Transverse colon (tissue), 4 donors: ENCODE measurements at regions of chrX and their contacts with region 1.

Region 1: DNA sequence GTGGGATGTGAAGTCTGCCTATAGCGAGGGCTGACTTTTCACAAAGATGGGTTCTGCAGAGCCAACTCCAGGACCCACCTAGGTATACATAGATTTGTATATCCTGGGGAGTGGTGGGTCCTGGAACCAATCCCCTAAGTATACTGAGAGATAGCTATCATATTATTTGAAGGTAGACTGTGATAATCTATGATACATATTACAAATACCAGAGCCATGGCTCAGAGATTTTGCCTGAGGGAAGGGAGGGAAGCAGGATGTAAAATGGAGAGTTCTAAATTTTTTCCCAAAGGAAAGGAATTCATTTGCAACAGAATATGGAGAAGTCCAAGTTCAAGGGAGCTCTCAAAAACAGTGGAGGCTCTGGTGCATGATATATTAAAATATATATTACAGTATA is 7.2 kb downstream of the TCEAL3 start:
- DNase-seq: no peak
- H3K4me3 ChIP-seq: no peak overlapping the region
- H3K27ac ChIP-seq: no peak overlapping the region
- H3K4me1 ChIP-seq: no peaks in the 10 kb centered on the region
- H3K27me3 ChIP-seq: no peaks in the 10 kb centered on the region
- CTCF ChIP-seq: no peak
- EP300 ChIP-seq: no peak
- POLR2A ChIP-seq: no peak

Region 2: DNA sequence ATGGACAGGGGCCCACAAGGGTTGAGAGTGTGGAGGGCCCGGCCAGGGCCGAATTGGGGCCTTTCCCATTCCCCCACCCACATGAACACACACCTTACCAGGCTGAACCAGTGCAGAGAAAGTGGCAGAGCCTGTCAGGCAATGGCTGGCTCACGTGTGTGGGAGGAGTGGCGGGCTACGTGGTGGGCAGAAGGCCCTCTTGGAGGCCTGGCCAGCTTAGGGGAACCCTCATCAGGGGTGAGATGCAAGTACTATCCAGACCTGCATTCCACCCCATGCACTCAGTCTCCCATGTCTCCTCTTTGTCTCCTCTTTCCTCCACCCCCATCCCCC is 28.7 kb before region 1 on chrX:
- in situ Hi-C with region 1: no loop called
- intact Hi-C with region 1: loop called (anchors 1 kb)
- DNase-seq: no peak
- H3K4me3 ChIP-seq: peak overlapping the region; percentile 48 to 64 (median 56)
- H3K27ac ChIP-seq: peak overlapping the region; percentile 78 to 87 (median 84)
- H3K4me1 ChIP-seq: peaks cover 0 to 6% (median 0%) of the 10 kb centered on the region in 4 donors
- H3K27me3 ChIP-seq: no peaks in the 10 kb centered on the region
- CTCF ChIP-seq: no peak
- EP300 ChIP-seq: no peak
- POLR2A ChIP-seq: no peak

Region 3: DNA sequence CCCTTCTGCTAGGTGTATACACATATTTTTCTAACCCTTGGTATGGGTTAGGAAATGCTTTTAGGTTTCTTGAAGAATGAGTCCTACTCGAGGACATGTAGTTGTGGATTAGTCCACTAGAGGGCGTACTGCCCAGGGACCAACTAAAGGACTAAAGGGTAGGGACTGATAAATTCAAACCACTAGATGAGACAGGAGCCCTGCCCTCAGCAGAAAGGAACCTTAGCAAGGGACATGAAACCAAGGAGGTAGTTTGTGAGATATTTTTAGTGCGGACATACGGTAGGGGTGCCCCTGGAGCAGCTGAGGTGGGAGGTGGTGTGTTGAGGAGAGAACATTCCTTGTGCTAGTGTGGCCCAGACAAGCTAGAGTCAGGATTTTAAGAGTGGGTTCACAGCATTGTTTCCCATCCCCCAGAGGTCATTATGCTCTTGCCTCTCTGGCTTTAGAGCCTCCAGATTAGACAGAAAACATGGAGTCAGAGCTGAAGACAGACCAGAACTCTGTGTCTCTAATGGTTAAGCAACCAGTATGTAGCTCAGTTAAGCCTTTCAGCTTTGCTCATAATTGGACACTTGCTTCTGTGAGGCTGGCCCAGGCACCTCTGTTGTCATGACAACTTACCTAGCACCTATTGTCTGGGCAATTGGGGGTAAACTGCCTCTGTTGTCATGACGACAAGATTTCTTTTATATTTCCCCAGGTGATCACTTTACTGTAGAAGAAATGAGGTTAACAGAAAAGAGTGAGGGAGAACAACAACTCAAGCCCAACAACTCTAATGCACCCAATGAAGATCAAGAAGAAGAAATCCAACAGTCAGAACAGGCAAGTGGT is 96.8 kb after region 1 on chrX:
- in situ Hi-C with region 1: no loop called
- intact Hi-C with region 1: no loop called
- DNase-seq: peak; percentile 66
- H3K4me3 ChIP-seq: no peak overlapping the region
- H3K27ac ChIP-seq: no peak overlapping the region
- H3K4me1 ChIP-seq: peaks cover 3 to 5% (median 3%) of the 10 kb centered on the region in 4 donors
- H3K27me3 ChIP-seq: no peaks in the 10 kb centered on the region
- CTCF ChIP-seq: peak; percentile 52 to 71 (median 54)
- EP300 ChIP-seq: no peak
- POLR2A ChIP-seq: no peak